ENCODE measurements at regions of chr9 and their contacts with region 1.

Region 1: DNA sequence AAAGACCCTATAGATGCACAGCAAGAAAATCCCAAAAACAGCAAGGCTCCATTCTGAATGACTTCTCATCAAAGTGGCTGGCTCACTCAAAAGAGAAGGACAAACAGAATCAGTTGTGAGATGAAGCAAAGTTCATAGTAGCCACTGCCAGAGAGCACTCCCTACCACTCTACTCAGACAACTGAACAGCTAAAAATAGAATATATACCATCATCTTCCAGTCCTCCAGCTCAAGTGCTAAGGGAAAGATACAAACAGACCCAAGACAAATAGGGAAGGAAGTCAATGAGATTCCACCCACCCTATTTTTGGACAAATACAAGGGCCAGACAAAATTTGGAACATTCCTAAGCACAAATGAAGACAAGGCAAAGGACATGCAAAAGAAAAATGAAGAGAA is 20.6 kb downstream of the GNAQ start:
- DNase-seq: no peak
- ATAC-seq: no peak
- H3K4me3 ChIP-seq: no peak overlapping the region
- H3K4me3 Mint-ChIP-seq: peak overlapping the region; percentile 49
- H3K27ac ChIP-seq: peak overlapping the region in 1 of 2 donors; percentile 7
- H3K27ac Mint-ChIP-seq: peak overlapping the region; percentile 56
- H3K4me1 ChIP-seq: peaks cover 17% of the 10 kb centered on the region
- H3K4me1 Mint-ChIP-seq: peaks cover 75% of the 10 kb centered on the region
- H3K27me3 ChIP-seq: no peaks in the 10 kb centered on the region
- H3K27me3 Mint-ChIP-seq: no peaks in the 10 kb centered on the region
- CTCF ChIP-seq: no peak

Region 2: DNA sequence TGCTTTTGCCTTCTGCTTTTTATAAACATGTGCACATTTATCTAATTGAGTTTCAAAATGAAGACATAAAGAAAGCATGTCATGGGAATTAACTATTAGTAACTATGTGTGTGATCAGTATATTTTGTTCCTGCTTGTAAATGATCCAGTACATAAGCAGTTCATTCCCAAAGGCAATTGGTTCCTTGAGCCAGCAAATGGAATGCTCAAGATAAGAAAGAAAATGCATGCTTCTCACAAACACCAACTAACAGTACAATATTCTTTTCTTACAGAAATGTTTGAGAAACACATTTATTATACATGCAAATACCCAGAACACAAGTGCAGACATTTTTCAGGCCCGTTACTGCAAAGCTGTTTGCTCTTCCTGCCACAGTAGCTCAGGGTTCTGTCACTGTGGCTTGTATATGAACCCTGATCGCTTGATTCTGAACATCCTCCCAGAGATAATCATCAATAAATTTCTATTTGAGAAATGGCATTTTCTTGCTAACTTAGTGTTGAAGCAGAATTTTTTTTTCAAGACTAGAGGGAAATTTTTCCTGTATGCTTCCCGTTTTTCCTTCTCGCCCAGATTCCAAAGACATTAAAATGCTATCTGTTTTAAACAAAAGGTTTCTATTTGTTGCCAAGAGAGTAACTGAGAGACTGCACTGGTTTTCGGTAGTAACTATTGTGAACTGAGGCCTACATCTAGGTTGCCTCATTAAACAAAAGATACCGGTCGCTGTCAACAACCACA is 18.7 kb after region 1 on chr9:
- CTCF ChIA-PET with region 1: interaction called, 8 read pairs
- POLR2A ChIA-PET with region 1: interaction called, 5 read pairs
- intact Hi-C with region 1: loop called in 1 of 2 experiments (anchors 2 kb)
- DNase-seq: peak in 5 of 14 experiments; percentile 5 to 61 (median 49)
- ATAC-seq: peak; percentile 33
- H3K4me3 ChIP-seq: peak overlapping the region; percentile 73
- H3K4me3 Mint-ChIP-seq: peak overlapping the region; percentile 80
- H3K27ac ChIP-seq: peak overlapping the region; percentile 60 to 68
- H3K27ac Mint-ChIP-seq: peak overlapping the region; percentile 85
- H3K4me1 ChIP-seq: peaks cover 25% of the 10 kb centered on the region
- H3K4me1 Mint-ChIP-seq: peaks cover 78% of the 10 kb centered on the region
- H3K27me3 ChIP-seq: no peaks in the 10 kb centered on the region
- H3K27me3 Mint-ChIP-seq: no peaks in the 10 kb centered on the region
- CTCF ChIP-seq: no peak